ENCODE measurements at regions of chr17 and their contacts with region 1.

Region 1: GRCh38 chr17:68035523-68036303 is at the start of gene KPNA2:
- DNase-seq: peak; percentile 97
- H3K4me3 ChIP-seq: peak within 1 kb of the TSS; percentile 89 to 100 (median 93)
- H3K27ac ChIP-seq: peak within 1 kb of the TSS; percentile 84
- H3K4me1 ChIP-seq: peaks cover 6% of the 10 kb centered on the region
- H3K27me3 ChIP-seq: no peaks in the 10 kb centered on the region
- CTCF ChIP-seq: no peak
- total RNA-seq, gene KPNA2: 63.7 to 168 TPM

Region 2: DNA sequence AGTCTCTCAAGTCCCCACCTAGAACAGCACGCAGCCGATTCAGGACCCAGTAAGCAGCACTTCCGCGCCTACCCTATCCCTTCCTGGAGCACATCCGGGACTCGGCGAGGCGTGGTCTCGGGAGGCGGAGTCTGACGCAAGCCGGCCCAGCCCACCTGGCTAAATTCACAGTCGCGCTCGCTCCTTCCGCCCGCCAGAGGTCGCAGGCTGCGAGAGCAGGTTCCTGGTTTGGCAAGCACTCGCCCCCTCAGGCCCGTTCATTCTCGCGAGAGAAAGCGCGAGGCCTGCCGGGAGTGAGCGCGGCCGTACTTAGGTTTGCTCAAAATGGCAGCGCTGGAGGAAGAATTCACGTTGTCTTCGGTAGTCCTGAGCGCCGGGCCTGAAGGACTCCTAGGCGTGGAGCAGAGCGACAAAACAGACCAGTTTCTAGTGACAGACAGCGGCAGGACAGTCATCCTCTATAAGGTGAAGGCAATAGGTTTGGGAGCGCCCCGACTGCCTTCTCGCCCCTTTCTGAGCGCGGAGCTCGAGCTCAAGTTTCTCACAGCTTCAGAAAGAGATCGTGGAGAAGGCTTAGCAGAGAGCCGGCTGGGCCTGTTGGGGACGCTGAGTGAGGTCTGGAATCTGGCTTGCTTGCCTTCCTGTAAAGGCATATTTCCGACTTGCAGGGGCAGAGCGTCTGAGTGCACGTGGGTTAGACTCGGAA is 317.9 kb before region 1 on chr17 and contains the start of gene NOL11:
- CTCF ChIA-PET with region 1: no interaction called
- dilution Hi-C with region 1: no loop called
- in situ Hi-C with region 1: no loop called
- intact Hi-C with region 1: loop called (anchors 10 kb)
- DNase-seq: peak; percentile 97
- H3K4me3 ChIP-seq: peak within 1 kb of the TSS; percentile 81 to 90 (median 81)
- H3K27ac ChIP-seq: peak within 1 kb of the TSS; percentile 85
- H3K4me1 ChIP-seq: peaks cover 16% of the 10 kb centered on the region
- H3K27me3 ChIP-seq: no peaks in the 10 kb centered on the region
- CTCF ChIP-seq: peak; percentile 81 to 98
- total RNA-seq, gene NOL11: 36.5 to 40.6 TPM

Region 3: DNA sequence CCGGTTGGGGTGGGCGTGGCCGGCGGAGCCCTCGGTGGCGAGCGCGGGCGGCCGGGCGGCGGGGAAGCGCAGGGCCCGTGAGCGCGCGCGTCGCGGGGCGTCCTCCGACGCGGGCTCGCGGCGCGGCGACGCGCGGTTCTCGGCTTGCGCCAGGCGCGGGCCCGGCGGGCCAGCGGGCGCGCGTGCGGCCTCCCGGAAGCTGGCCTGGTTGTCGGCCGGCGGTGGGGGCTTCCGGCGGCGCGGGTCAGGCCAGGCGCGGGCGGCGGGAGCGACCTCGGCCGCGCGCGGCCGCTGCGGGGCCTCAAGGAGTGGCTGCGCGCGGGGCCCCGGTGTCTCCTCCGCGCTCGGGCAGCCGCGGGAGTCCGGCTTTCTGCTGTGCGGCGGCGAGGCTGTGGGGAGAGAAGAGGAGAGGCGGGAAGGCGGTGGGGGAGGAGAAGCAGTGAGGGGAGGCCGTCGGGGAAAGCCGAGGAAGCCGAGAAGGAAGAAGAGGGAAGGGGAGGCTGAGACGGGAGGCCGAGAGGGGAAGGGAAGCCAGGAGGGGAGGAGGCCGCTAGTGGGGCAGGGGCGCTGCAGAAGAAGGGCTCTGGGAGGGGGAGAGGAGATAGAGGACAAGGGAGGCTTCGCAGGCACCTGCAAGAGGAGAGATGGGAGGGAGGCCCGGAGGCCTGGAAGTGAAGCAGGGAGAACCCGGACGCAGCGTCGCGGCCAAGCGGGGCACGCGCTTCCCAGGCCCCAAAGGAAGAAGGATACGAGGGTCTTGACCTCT is 41.9 kb before region 1 on chr17:
- CTCF ChIA-PET with region 1: no interaction called
- dilution Hi-C with region 1: no loop called
- in situ Hi-C with region 1: no loop called
- intact Hi-C with region 1: loop called (anchors 2 kb)
- DNase-seq: peak; percentile 68
- H3K4me3 ChIP-seq: peak overlapping the region; percentile 72 to 87 (median 73)
- H3K27ac ChIP-seq: peak overlapping the region; percentile 2
- H3K4me1 ChIP-seq: peaks cover 24% of the 10 kb centered on the region
- H3K27me3 ChIP-seq: no peaks in the 10 kb centered on the region
- CTCF ChIP-seq: no peak

Region 4: GRCh38 chr17:68004201-68004600 is 31.5 kb before region 1 on chr17:
- CTCF ChIA-PET with region 1: no interaction called
- dilution Hi-C with region 1: no loop called
- in situ Hi-C with region 1: no loop called
- intact Hi-C with region 1: no loop called
- DNase-seq: no peak
- H3K4me3 ChIP-seq: no peak overlapping the region
- H3K27ac ChIP-seq: no peak overlapping the region
- H3K4me1 ChIP-seq: peaks cover 6% of the 10 kb centered on the region
- H3K27me3 ChIP-seq: no peaks in the 10 kb centered on the region
- CTCF ChIP-seq: no peak

Region 5: DNA sequence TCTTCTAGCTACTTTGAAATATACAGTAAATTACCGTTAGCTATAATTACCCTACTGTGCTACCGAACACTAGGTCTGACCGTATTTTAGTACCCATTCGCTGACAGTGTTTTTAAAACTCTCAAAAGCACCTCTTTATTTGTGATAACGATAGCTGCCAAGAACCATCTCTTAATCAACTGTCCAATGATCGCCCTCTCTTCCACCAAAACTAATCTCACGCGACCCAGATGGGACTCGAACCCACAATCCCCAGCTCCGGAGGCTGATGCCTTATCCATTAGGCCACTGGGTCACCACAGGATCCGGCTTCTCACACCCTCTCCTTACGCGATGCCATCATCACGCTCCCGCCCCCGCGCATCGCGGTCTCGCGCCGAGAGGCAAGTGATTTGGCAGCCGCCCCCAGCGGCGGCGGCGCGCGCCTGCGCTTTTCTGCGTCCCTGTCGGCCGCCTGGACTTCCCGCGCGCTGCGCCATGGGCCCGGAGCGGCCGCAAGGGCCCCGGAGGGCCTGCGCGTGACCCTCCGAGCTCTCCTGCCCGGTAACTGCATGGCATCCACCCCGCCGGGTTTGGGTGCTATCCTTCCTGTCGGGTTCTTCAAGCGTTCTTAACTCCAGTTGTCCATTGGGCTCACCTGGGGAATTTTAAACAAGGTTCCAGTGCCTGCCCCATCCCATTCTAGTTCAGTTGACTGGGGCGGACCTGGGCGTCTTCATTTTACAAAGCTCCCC is 15.9 kb before region 1 on chr17:
- CTCF ChIA-PET with region 1: interaction called, 7 read pairs
- dilution Hi-C with region 1: no loop called
- in situ Hi-C with region 1: no loop called
- intact Hi-C with region 1: loop called (anchors 1 kb)
- DNase-seq: peak; percentile 96
- H3K4me3 ChIP-seq: peak overlapping the region; percentile 41 to 45 (median 43)
- H3K27ac ChIP-seq: peak overlapping the region; percentile 40
- H3K4me1 ChIP-seq: peaks cover 7% of the 10 kb centered on the region
- H3K27me3 ChIP-seq: no peaks in the 10 kb centered on the region
- CTCF ChIP-seq: peak; percentile 16 to 43

Region 6: GRCh38 chr17:68074279-68074678 is 38.6 kb after region 1 on chr17:
- CTCF ChIA-PET with region 1: no interaction called
- dilution Hi-C with region 1: no loop called
- in situ Hi-C with region 1: no loop called
- intact Hi-C with region 1: no loop called
- DNase-seq: no peak
- H3K4me3 ChIP-seq: no peak overlapping the region
- H3K27ac ChIP-seq: no peak overlapping the region
- H3K4me1 ChIP-seq: no peaks in the 10 kb centered on the region
- H3K27me3 ChIP-seq: no peaks in the 10 kb centered on the region
- CTCF ChIP-seq: no peak

Region 7: GRCh38 chr17:68101075-68101992 is 65.6 kb after region 1 on chr17:
- CTCF ChIA-PET with region 1: no interaction called
- dilution Hi-C with region 1: no loop called
- in situ Hi-C with region 1: no loop called
- intact Hi-C with region 1: loop called (anchors 10 kb)
- DNase-seq: peak; percentile 88
- H3K4me3 ChIP-seq: peak overlapping the region; percentile 70 to 83 (median 71)
- H3K27ac ChIP-seq: peak overlapping the region; percentile 14
- H3K4me1 ChIP-seq: peaks cover 10% of the 10 kb centered on the region
- H3K27me3 ChIP-seq: no peaks in the 10 kb centered on the region
- CTCF ChIP-seq: no peak